GM23248 (cell line): ENCODE measurements at regions of chr7 and their contacts with region 1.

Region 1: GRCh38 chr7:94289071-94289470 is 105.6 kb upstream of the COL1A2 start:
- DNase-seq: peak; percentile 94
- H3K4me3 ChIP-seq: 0 out of 2 replicates have a peak overlapping the region, but pooled peaks have one; percentile 12
- H3K27ac ChIP-seq: peak overlapping the region; percentile 1; the same call in 1 of the 2 replicates
- H3K4me1 ChIP-seq: peaks cover 11% of the 10 kb centered on the region
- H3K27me3 ChIP-seq: no peaks in the 10 kb centered on the region

Region 2: DNA sequence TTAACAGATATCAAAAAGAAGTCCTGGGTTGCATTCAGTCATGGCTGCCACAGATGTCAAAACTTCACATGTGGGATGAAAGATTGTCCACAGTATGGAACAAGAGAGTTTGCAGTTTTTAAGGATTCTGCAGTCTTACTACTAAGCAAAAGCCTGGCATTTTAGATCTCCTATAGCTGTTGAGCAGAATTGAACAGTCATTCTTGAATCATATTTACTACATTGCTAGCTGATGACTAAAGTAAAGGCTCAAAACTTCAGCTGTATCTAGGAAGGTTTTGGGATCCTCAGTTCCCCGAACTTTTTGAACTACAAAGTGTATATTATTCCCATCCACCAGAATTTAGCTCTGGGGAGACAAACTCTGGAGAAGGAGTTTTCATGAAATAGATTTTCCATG is 315.9 kb before region 1 on chr7:
- in situ Hi-C with region 1: no loop called
- DNase-seq: peak; percentile 80
- H3K4me3 ChIP-seq: no peak overlapping the region; the same call in 1 of the 2 replicates
- H3K27ac ChIP-seq: peak overlapping the region; percentile 32
- H3K4me1 ChIP-seq: peaks cover 23% of the 10 kb centered on the region
- H3K27me3 ChIP-seq: no peaks in the 10 kb centered on the region

Region 3: GRCh38 chr7:94059746-94060145 is 229.3 kb before region 1 on chr7:
- in situ Hi-C with region 1: no loop called
- DNase-seq: peak; percentile 79
- H3K4me3 ChIP-seq: no peak overlapping the region
- H3K27ac ChIP-seq: peak overlapping the region; percentile 83
- H3K4me1 ChIP-seq: peaks cover 53% of the 10 kb centered on the region
- H3K27me3 ChIP-seq: no peaks in the 10 kb centered on the region

Region 4: DNA sequence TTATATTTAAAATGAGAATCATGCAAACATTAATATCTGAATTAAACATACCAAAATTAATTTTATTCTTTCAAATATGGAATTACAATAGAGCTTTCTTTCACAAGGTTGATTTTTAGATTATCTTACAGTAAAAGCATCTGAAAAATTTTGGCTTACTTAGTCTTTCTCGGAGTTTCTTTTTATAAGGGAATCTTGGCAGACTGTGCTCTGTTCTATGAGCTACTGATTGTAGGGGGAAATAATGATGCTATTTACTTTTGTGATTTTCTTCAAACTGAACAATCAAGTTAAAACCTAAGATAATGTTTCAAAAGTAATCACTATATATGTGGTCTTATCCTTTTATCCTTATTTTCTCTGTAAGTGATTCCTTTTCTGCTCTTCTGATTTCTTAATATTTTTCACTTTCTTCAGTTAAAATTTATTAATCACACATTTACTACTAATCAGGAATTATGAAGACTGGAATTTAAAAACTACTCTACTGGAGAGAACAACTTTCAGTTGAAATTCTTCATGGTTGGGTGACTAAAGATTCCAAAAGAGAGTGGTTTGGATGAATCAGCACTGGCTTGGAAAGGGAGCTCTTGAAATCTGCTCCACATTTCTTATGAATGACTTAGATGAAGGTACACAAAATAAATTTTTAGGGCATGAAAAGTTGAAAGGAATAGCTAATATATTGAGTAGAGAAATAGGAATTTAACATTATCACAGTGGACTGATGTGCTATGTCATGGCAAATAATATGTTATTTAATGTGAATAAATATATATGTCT is 722.3 kb after region 1 on chr7:
- in situ Hi-C with region 1: loop called (anchors 25 kb)
- DNase-seq: peak; percentile 87
- H3K4me3 ChIP-seq: peak overlapping the region; percentile 18; the same call in 1 of the 2 replicates
- H3K27ac ChIP-seq: peak overlapping the region; percentile 57
- H3K4me1 ChIP-seq: peaks cover 19% of the 10 kb centered on the region
- H3K27me3 ChIP-seq: no peaks in the 10 kb centered on the region

Region 5: GRCh38 chr7:95246831-95247370 is 957.8 kb after region 1 on chr7:
- in situ Hi-C with region 1: loop called (anchors 25 kb)
- DNase-seq: peak; percentile 81
- H3K4me3 ChIP-seq: peak overlapping the region; percentile 56
- H3K27ac ChIP-seq: no peak overlapping the region
- H3K4me1 ChIP-seq: 0 out of 2 replicates have a peak, but pooled peaks cover 3% of the 10 kb centered on the region
- H3K27me3 ChIP-seq: peaks cover 11% of the 10 kb centered on the region; the same call in 1 of the 2 replicates